ENCODE measurements at regions of chr15 and their contacts with region 1.

Region 1: GRCh38 chr15:85354461-85354860 is 25.9 kb upstream of the AKAP13 start:
- DNase-seq: no peak
- ATAC-seq: no peak
- H3K4me3 ChIP-seq: no peak overlapping the region
- H3K27ac ChIP-seq: no peak overlapping the region
- H3K4me1 ChIP-seq: no peaks in the 10 kb centered on the region
- H3K27me3 ChIP-seq: no peaks in the 10 kb centered on the region

Region 2: GRCh38 chr15:85579957-85580694 is 225.7 kb after region 1 on chr15:
- intact Hi-C with region 1: loop called in 1 of 2 experiments (anchors 10 kb)
- DNase-seq: peak in 1 of 2 donors; percentile 61
- ATAC-seq: peak; percentile 69
- H3K4me3 ChIP-seq: no peak overlapping the region
- H3K27ac ChIP-seq: peak overlapping the region; percentile 51 to 65
- H3K4me1 ChIP-seq: peaks cover 5 to 6% of the 10 kb centered on the region in 2 donors
- H3K27me3 ChIP-seq: no peaks in the 10 kb centered on the region